B cell (primary cell): ENCODE measurements at regions of chr2 and their contacts with region 1.

Region 1: GRCh38 chr2:181058378-181059269 is 78.2 kb downstream of the UBE2E3 start:
- DNase-seq: peak; percentile 63
- ATAC-seq: peak; percentile 54
- H3K4me3 ChIP-seq: no peak overlapping the region
- H3K4me3 Mint-ChIP-seq: no peak overlapping the region
- H3K27ac ChIP-seq: no peak overlapping the region
- H3K27ac Mint-ChIP-seq: no peak overlapping the region
- H3K4me1 ChIP-seq: no peaks in the 10 kb centered on the region
- H3K4me1 Mint-ChIP-seq: no peaks in the 10 kb centered on the region
- H3K27me3 ChIP-seq: no peaks in the 10 kb centered on the region
- H3K27me3 Mint-ChIP-seq: no peaks in the 10 kb centered on the region
- CTCF ChIP-seq: peak; percentile 92

Region 2: DNA sequence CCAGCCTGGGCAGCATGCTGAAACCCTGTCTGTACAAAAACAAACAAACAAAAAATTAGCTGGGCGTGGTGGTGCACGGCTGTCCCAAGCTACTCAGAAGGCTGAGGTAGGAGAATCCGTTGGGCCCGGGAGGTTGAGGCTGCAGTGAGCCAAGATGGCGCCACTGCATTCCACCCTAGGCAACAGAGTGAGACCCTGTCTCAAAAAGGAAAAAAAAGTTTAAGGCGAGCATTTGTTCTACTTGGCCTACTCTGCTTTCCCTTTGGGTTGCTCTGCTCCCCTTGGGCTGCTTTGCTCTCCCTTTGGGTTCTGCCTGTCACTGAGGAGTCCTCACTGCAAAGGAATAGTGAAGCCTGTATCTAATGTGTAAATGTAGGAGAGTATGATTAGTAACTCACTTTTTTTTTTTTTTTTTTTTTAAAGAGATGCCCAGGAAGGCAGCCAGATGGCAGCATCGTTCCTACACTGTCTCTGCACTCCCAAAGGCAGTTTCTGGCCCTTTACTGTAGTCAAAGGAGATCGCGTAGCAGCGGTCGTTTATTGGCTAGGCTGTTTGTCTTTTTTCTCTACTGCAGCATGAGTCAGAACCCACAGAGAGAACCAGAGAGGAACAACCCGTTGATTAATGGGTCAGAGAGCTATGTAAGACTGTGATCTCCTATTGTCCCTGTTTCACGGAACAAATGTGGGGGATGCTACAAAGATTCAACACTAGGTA is 933.2 kb before region 1 on chr2:
- CTCF ChIA-PET with region 1: interaction called, 163 read pairs
- POLR2A ChIA-PET with region 1: interaction called, 3 read pairs
- intact Hi-C with region 1: loop called (anchors 1 kb)
- DNase-seq: peak; percentile 55
- ATAC-seq: peak; percentile 93
- H3K4me3 ChIP-seq: no peak overlapping the region
- H3K4me3 Mint-ChIP-seq: no peak overlapping the region
- H3K27ac ChIP-seq: no peak overlapping the region
- H3K27ac Mint-ChIP-seq: no peak overlapping the region
- H3K4me1 ChIP-seq: peaks cover 0 to 5% of the 10 kb centered on the region in 2 donors
- H3K4me1 Mint-ChIP-seq: peaks cover 4% of the 10 kb centered on the region
- H3K27me3 ChIP-seq: peaks cover 0 to 4% (median 0%) of the 10 kb centered on the region in 4 experiments
- H3K27me3 Mint-ChIP-seq: peaks cover 18% of the 10 kb centered on the region
- CTCF ChIP-seq: peak; percentile 66

Region 3: DNA sequence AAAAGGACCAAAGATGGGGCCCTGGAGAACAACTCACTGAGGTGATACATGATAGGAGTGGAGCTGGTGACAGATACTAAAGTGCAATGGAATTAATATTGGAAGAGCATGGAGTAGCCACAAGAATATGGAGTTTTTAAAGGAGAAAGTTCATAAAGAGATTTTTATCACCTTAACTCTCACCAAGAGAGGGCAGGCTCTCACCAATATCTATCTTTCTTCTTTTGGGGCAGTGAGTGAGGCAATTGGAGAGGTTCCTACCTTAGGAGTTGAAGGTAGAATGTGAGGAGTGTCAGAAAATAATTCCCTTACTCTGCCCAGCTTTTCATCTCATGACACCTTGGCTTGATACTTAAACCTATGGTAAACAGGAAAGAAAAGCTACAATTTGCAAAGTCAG is 817.9 kb before region 1 on chr2:
- CTCF ChIA-PET with region 1: interaction called, 18 read pairs
- POLR2A ChIA-PET with region 1: no interaction called
- intact Hi-C with region 1: loop called (anchors 1 kb)
- DNase-seq: peak; percentile 13
- ATAC-seq: no peak
- H3K4me3 ChIP-seq: no peak overlapping the region
- H3K4me3 Mint-ChIP-seq: no peak overlapping the region
- H3K27ac ChIP-seq: no peak overlapping the region
- H3K27ac Mint-ChIP-seq: no peak overlapping the region
- H3K4me1 ChIP-seq: no peaks in the 10 kb centered on the region
- H3K4me1 Mint-ChIP-seq: no peaks in the 10 kb centered on the region
- H3K27me3 ChIP-seq: no peaks in the 10 kb centered on the region
- H3K27me3 Mint-ChIP-seq: peaks cover 3% of the 10 kb centered on the region
- CTCF ChIP-seq: peak; percentile 28

Region 4: DNA sequence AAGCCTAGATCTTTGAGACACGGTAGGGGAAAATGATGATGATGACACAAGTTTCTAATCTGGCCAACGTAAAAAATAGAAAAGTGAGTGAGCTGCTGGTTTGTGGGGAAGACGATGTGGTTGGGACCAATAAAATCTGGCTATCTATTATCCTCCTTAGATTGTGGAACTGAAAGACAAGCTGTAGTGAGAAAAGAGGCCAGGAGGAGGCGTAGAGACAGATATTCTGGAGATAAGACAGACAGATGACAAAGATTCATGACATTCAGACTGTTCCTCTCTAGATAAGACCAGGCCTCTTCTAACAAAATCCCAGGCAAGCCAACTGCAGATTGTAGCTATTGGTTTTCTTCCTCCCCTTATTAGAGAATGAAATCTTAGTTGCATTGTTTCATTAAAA is 454.5 kb before region 1 on chr2:
- CTCF ChIA-PET with region 1: interaction called, 3 read pairs
- POLR2A ChIA-PET with region 1: no interaction called
- intact Hi-C with region 1: loop called (anchors 2 kb)
- DNase-seq: peak; percentile 10
- ATAC-seq: no peak
- H3K4me3 ChIP-seq: no peak overlapping the region
- H3K4me3 Mint-ChIP-seq: no peak overlapping the region
- H3K27ac ChIP-seq: no peak overlapping the region
- H3K27ac Mint-ChIP-seq: no peak overlapping the region
- H3K4me1 ChIP-seq: no peaks in the 10 kb centered on the region
- H3K4me1 Mint-ChIP-seq: no peaks in the 10 kb centered on the region
- H3K27me3 ChIP-seq: no peaks in the 10 kb centered on the region
- H3K27me3 Mint-ChIP-seq: no peaks in the 10 kb centered on the region
- CTCF ChIP-seq: peak; percentile 34

Region 5: DNA sequence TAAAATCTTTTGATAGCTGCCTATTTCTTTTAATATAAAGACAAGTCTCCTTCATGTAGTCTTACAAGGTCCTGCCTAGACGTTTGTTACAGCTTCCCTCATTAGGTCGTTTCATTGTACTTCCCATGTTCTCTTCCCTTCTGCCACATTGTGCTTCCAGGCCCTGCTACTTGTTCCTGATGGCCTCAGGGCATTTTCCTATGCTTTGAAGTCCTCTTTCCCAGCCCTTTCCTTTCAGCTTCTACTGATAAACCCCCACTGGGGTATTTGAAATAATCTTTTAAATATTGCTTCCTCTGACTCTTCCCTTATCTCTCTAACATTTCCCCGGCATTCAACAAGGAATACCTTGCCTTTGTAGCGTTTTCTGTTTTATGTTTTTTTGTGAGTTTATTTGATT is 10.8 kb before region 1 on chr2:
- CTCF ChIA-PET with region 1: interaction called, 21 read pairs
- POLR2A ChIA-PET with region 1: no interaction called
- intact Hi-C with region 1: no loop called
- DNase-seq: no peak
- ATAC-seq: no peak
- H3K4me3 ChIP-seq: no peak overlapping the region
- H3K4me3 Mint-ChIP-seq: no peak overlapping the region
- H3K27ac ChIP-seq: no peak overlapping the region
- H3K27ac Mint-ChIP-seq: no peak overlapping the region
- H3K4me1 ChIP-seq: no peaks in the 10 kb centered on the region
- H3K4me1 Mint-ChIP-seq: peaks cover 4% of the 10 kb centered on the region
- H3K27me3 ChIP-seq: no peaks in the 10 kb centered on the region
- H3K27me3 Mint-ChIP-seq: no peaks in the 10 kb centered on the region
- CTCF ChIP-seq: no peak

Region 6: DNA sequence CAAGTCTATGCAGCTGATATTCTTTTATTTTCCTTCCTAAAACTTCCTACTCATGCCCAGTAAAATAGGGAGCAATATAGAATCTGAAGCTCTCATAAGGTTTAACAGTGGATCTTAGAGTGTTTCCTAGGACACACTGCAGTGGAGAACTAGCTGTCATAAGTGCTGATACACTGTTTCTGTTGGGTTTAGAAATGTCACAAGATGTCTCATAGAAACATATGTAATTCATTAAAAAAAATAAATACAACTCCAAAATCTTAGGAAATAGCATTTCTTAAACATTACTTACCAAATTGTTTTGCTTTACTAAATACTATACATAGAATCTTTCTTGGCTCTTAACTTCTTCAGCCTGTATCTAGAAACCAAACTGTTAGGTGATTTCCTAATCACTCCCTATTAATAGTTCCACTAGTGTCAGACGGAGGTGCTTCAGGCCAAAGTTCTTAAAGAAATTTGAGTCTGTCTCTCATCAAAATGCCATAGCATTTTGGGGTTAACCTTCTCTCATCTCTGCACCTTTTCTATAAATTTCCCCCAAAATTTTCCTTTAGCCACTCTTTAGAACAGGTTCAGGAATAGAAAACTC is 504.6 kb after region 1 on chr2:
- CTCF ChIA-PET with region 1: no interaction called
- POLR2A ChIA-PET with region 1: no interaction called
- intact Hi-C with region 1: no loop called
- DNase-seq: no peak
- ATAC-seq: no peak
- H3K4me3 ChIP-seq: no peak overlapping the region
- H3K4me3 Mint-ChIP-seq: no peak overlapping the region
- H3K27ac ChIP-seq: no peak overlapping the region
- H3K27ac Mint-ChIP-seq: no peak overlapping the region
- H3K4me1 ChIP-seq: no peaks in the 10 kb centered on the region
- H3K4me1 Mint-ChIP-seq: no peaks in the 10 kb centered on the region
- H3K27me3 ChIP-seq: no peaks in the 10 kb centered on the region
- H3K27me3 Mint-ChIP-seq: no peaks in the 10 kb centered on the region
- CTCF ChIP-seq: no peak